ENCODE measurements at regions of chr9 and their contacts with region 1.

Region 1: GRCh38 chr9:893843-894420 is 52.4 kb downstream of the DMRT1 start:
- DNase-seq: peak; percentile 41
- H3K4me3 ChIP-seq: no peak overlapping the region
- H3K27ac ChIP-seq: no peak overlapping the region
- H3K4me1 ChIP-seq: no peaks in the 10 kb centered on the region
- H3K27me3 ChIP-seq: peaks cover 8% of the 10 kb centered on the region
- CTCF ChIP-seq: peak; percentile 73

Region 2: GRCh38 chr9:806285-807156 is 87.4 kb before region 1 on chr9:
- CTCF ChIA-PET with region 1: no interaction called
- POLR2A ChIA-PET with region 1: interaction called, 11 read pairs
- intact Hi-C with region 1: no loop called
- DNase-seq: peak; percentile 45
- H3K4me3 ChIP-seq: no peak overlapping the region
- H3K27ac ChIP-seq: no peak overlapping the region
- H3K4me1 ChIP-seq: peaks cover 3% of the 10 kb centered on the region
- H3K27me3 ChIP-seq: peaks cover 21% of the 10 kb centered on the region
- CTCF ChIP-seq: peak; percentile 72

Region 3: GRCh38 chr9:1009101-1009707 is 115.3 kb after region 1 on chr9:
- CTCF ChIA-PET with region 1: no interaction called
- POLR2A ChIA-PET with region 1: no interaction called
- intact Hi-C with region 1: loop called (anchors 2 kb)
- DNase-seq: peak; percentile 82
- H3K4me3 ChIP-seq: no peak overlapping the region
- H3K27ac ChIP-seq: no peak overlapping the region
- H3K4me1 ChIP-seq: no peaks in the 10 kb centered on the region
- H3K27me3 ChIP-seq: peaks cover 7% of the 10 kb centered on the region
- CTCF ChIP-seq: peak; percentile 92

Region 4: GRCh38 chr9:1604942-1605560 is 711.1 kb after region 1 on chr9:
- CTCF ChIA-PET with region 1: no interaction called
- POLR2A ChIA-PET with region 1: no interaction called
- intact Hi-C with region 1: loop called (anchors 10 kb)
- DNase-seq: peak; percentile 54
- H3K4me3 ChIP-seq: no peak overlapping the region
- H3K27ac ChIP-seq: no peak overlapping the region
- H3K4me1 ChIP-seq: no peaks in the 10 kb centered on the region
- H3K27me3 ChIP-seq: peaks cover under 1% of the 10 kb centered on the region
- CTCF ChIP-seq: peak; percentile 69